CD4-positive, alpha-beta T cell (primary cell): ENCODE measurements at regions of chr12 and their contacts with region 1.

Region 1: GRCh38 chr12:120292661-120293531 is at the start of gene RNU4-1:
- DNase-seq: peak; percentile 49 to 92 (median 64)
- ATAC-seq: peak; percentile 51
- H3K4me3 ChIP-seq: peak within 1 kb of the TSS; percentile 75
- H3K4me3 Mint-ChIP-seq: no peak within 1 kb of the TSS
- H3K27ac ChIP-seq: peak within 1 kb of the TSS; percentile 99 to 100
- H3K27ac Mint-ChIP-seq: no peak within 1 kb of the TSS
- H3K4me1 ChIP-seq: peaks cover 23% of the 10 kb centered on the region
- H3K4me1 Mint-ChIP-seq: peaks cover 5% of the 10 kb centered on the region
- H3K27me3 ChIP-seq: no peaks in the 10 kb centered on the region
- H3K27me3 Mint-ChIP-seq: no peaks in the 10 kb centered on the region
- CTCF ChIP-seq: no peak
- total RNA-seq, gene RNU4-1: 913 to 1,035 TPM

Region 2: DNA sequence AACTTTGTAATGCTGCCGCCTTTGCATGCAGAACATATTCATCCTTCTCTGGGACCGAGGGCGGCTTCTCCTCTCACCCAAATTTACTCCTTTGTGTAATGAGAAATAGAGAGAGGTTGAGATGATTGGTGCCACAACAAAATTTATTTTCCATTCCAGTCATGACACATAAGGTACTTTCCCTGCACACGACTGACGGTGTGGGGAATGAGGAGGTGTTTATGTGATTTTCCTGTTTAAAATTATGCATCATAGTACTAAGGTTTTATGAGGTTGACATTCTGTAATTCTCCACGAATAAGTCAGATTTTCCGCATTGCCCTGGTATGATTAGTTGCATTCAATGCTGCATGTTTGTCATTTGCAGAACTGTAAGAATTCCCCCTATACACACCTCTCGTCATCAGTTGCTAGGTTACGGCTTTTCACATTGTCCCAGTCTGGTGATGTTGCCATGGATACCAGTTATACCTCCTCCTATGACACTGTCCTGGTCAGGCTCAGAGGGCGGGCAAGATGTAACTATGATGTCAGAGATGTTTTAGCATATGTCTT is 280.8 kb before region 1 on chr12:
- CTCF ChIA-PET with region 1: no interaction called
- POLR2A ChIA-PET with region 1: interaction called, 9 read pairs
- intact Hi-C with region 1: loop called in 1 of 2 experiments (anchors 5 kb)
- DNase-seq: peak; percentile 27 to 98 (median 62)
- ATAC-seq: peak; percentile 57
- H3K4me3 ChIP-seq: peak overlapping the region; percentile 21
- H3K4me3 Mint-ChIP-seq: peak overlapping the region; percentile 76
- H3K27ac ChIP-seq: peak overlapping the region; percentile 86 to 96
- H3K27ac Mint-ChIP-seq: peak overlapping the region; percentile 96
- H3K4me1 ChIP-seq: peaks cover 75% of the 10 kb centered on the region
- H3K4me1 Mint-ChIP-seq: peaks cover 81% of the 10 kb centered on the region
- H3K27me3 ChIP-seq: no peaks in the 10 kb centered on the region
- H3K27me3 Mint-ChIP-seq: no peaks in the 10 kb centered on the region
- CTCF ChIP-seq: no peak

Region 3: DNA sequence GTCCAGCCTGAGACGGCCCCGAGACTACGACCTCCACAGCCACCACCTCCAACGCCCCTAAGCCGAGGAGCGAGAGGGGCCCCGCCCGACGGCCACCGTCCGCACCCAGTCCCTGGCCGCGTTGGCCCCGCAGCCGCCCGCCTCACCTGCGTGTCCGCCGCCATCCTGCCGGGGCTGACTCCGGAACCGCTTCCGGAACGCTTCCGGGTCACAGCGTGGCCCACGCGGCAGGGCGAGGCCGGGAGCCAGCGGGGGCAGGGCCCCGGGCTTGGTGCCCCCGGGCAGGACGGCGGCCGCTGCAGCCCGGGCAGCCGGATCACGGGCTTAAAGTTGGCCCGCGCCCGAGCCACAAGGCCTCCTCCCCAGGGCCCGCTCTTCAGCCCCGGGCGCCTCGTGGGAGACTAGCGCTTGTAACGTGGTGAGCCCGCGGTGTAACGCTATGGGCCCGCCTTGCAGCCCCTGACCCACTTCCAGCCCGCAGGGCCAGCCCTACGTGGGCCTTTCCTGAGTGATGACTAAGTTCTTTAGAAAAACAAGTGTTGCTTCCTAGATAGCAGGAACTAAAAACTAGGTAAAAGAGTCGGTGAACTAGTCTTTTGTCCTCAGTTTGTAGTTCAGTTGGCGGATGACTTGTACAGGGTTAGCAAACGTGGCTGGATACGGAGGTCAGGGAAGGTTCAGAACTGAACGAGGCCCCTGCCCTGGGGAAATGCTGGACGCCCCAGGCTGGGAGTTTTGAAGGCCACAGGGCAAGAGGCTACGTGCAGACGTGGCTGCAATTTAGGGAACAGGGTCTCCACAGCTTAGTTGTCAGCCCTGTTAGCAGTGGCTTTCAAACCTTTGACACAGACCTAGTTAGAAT is 98.1 kb before region 1 on chr12 and contains the start of gene GCN1:
- CTCF ChIA-PET with region 1: interaction called, 13 read pairs
- POLR2A ChIA-PET with region 1: interaction called, 224 read pairs
- intact Hi-C with region 1: no loop called
- DNase-seq: peak; percentile 75 to 92 (median 86)
- ATAC-seq: peak; percentile 88
- H3K4me3 ChIP-seq: peak within 1 kb of the TSS; percentile 64
- H3K4me3 Mint-ChIP-seq: peak within 1 kb of the TSS; percentile 95
- H3K27ac ChIP-seq: peak within 1 kb of the TSS; percentile 75 to 86
- H3K27ac Mint-ChIP-seq: peak within 1 kb of the TSS; percentile 98
- H3K4me1 ChIP-seq: peaks cover 49% of the 10 kb centered on the region
- H3K4me1 Mint-ChIP-seq: peaks cover 45% of the 10 kb centered on the region
- H3K27me3 ChIP-seq: no peaks in the 10 kb centered on the region
- H3K27me3 Mint-ChIP-seq: no peaks in the 10 kb centered on the region
- CTCF ChIP-seq: no peak
- total RNA-seq, gene GCN1: 121 to 128 TPM

Region 4: DNA sequence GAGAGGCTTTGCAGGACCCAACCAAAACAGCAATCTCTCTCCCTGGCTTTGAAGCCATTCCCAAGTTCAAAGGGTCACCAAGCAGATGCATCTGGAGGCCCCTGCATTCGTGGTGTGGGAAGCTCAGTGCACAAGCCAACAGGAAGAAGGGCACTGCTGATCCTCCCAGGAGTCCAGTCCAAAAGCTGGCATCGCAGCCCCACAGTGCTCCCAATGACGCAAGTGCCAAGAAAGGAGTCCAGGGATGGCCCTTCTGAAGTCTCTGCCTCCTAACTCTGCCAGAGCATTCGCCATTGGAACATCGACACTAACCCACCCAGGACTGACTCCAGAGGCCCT is 52.4 kb before region 1 on chr12:
- CTCF ChIA-PET with region 1: no interaction called
- POLR2A ChIA-PET with region 1: interaction called, 143 read pairs
- intact Hi-C with region 1: no loop called
- DNase-seq: no peak
- ATAC-seq: no peak
- H3K4me3 ChIP-seq: no peak overlapping the region
- H3K4me3 Mint-ChIP-seq: no peak overlapping the region
- H3K27ac ChIP-seq: no peak overlapping the region
- H3K27ac Mint-ChIP-seq: peak overlapping the region; percentile 69
- H3K4me1 ChIP-seq: peaks cover 92% of the 10 kb centered on the region
- H3K4me1 Mint-ChIP-seq: peaks cover 78% of the 10 kb centered on the region
- H3K27me3 ChIP-seq: no peaks in the 10 kb centered on the region
- H3K27me3 Mint-ChIP-seq: no peaks in the 10 kb centered on the region
- CTCF ChIP-seq: no peak

Region 5: DNA sequence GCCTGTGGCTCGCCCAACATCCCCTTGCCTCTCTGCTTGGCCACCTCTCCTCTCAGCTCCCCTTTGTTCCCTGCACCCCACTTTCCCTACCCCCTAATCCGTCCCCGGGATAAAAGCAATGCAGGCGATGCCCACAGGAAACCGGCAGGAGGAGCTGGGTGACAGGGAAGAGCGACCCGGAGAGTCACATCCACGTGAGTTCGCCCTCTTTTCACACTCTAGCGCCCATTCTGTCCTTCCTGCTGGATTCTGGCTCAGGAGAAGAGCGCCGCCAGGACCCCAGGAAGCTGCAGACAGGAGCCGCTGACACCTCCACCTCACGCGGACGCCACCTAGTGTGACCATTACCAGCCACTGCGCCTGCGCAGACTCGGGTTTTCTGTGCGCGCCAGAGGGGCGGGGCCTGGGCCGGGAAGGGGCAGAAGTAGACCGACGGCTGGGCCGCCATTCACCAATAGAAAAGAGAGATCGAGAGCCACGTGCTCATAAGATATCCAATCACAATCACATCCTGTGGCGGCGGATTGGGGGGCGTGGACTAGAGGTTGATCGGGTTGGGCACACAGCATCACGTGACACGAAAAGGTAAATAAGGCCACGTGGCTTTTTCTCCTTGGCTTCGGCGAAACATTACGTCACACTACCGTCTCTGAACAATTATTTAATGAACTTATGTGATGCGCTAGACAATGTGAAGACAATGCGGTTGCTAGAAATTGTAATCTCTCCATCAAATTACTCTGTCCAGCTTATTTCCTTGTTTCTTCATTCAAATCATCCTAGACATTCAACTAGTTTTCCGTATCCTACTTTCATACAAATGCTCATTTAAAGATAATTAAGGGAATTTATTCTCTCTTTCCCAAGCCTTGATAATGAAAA is 24.6 kb after region 1 on chr12:
- CTCF ChIA-PET with region 1: interaction called, 3 read pairs
- POLR2A ChIA-PET with region 1: interaction called, 127 read pairs
- intact Hi-C with region 1: loop called in 1 of 2 experiments (anchors 1 kb)
- DNase-seq: peak; percentile 99 to 100 (median 100)
- ATAC-seq: peak; percentile 98
- H3K4me3 ChIP-seq: peak overlapping the region; percentile 80
- H3K4me3 Mint-ChIP-seq: peak overlapping the region; percentile 89
- H3K27ac ChIP-seq: peak overlapping the region; percentile 88 to 97
- H3K27ac Mint-ChIP-seq: peak overlapping the region; percentile 95
- H3K4me1 ChIP-seq: peaks cover 15% of the 10 kb centered on the region
- H3K4me1 Mint-ChIP-seq: peaks cover 16% of the 10 kb centered on the region
- H3K27me3 ChIP-seq: no peaks in the 10 kb centered on the region
- H3K27me3 Mint-ChIP-seq: no peaks in the 10 kb centered on the region
- CTCF ChIP-seq: peak; percentile 66

Region 6: DNA sequence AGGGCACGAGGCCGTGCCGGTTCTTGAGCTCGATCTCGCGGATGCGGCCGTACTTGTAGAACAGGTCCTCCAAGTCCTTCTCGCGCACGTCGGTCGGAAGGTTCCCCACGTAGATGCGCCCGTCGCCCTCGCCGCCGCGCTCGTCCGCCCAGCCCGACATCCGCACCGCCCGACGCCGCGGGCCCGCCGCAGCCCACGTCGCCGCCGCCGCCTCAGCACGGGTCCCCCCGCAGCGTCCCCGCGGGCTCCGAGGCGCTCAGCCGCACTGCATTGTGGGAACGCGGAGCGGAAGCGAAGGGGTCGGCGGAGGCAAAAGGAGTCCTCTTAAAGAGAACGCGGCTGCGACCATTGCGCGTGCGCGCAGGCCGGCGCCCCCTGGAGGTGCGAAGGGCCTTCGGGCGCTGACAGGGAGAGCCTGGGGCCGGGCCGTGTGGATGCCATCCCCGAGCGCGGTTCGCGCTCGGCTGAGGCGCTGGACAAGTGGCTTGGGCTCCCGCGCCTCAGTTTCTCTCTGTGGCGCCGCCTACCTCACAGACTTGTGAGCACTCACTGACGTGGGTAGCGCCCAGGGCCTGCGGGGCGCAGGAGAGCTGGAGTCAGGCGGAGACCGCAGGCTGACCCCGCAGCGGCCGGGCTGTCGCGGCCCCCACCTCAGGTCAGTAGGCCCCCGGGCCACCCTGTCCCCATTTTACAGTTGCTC is 176.7 kb after region 1 on chr12 and contains the start of gene SRSF9:
- CTCF ChIA-PET with region 1: no interaction called
- POLR2A ChIA-PET with region 1: interaction called, 17 read pairs
- intact Hi-C with region 1: no loop called
- DNase-seq: peak; percentile 94 to 99 (median 97)
- ATAC-seq: peak; percentile 86
- H3K4me3 ChIP-seq: peak within 1 kb of the TSS; percentile 57
- H3K4me3 Mint-ChIP-seq: peak within 1 kb of the TSS; percentile 90
- H3K27ac ChIP-seq: peak within 1 kb of the TSS; percentile 72 to 77
- H3K27ac Mint-ChIP-seq: peak within 1 kb of the TSS; percentile 87
- H3K4me1 ChIP-seq: peaks cover 39% of the 10 kb centered on the region
- H3K4me1 Mint-ChIP-seq: peaks cover 46% of the 10 kb centered on the region
- H3K27me3 ChIP-seq: no peaks in the 10 kb centered on the region
- H3K27me3 Mint-ChIP-seq: no peaks in the 10 kb centered on the region
- CTCF ChIP-seq: peak; percentile 91
- total RNA-seq, gene SRSF9: 124 TPM

Region 7: GRCh38 chr12:120761519-120761934 is 468.6 kb after region 1 on chr12:
- CTCF ChIA-PET with region 1: no interaction called
- POLR2A ChIA-PET with region 1: no interaction called
- intact Hi-C with region 1: no loop called
- DNase-seq: no peak
- ATAC-seq: peak; percentile 33
- H3K4me3 ChIP-seq: no peak overlapping the region
- H3K4me3 Mint-ChIP-seq: no peak overlapping the region
- H3K27ac ChIP-seq: peak overlapping the region; percentile 4 to 47
- H3K27ac Mint-ChIP-seq: peak overlapping the region; percentile 92
- H3K4me1 ChIP-seq: peaks cover 25% of the 10 kb centered on the region
- H3K4me1 Mint-ChIP-seq: peaks cover 31% of the 10 kb centered on the region
- H3K27me3 ChIP-seq: no peaks in the 10 kb centered on the region
- H3K27me3 Mint-ChIP-seq: no peaks in the 10 kb centered on the region
- CTCF ChIP-seq: no peak

Region 8: GRCh38 chr12:121802846-121803630 is 1510.1 kb after region 1 on chr12:
- CTCF ChIA-PET with region 1: no interaction called
- POLR2A ChIA-PET with region 1: interaction called, 19 read pairs
- intact Hi-C with region 1: no loop called
- DNase-seq: peak; percentile 78 to 96 (median 85)
- ATAC-seq: peak; percentile 47
- H3K4me3 ChIP-seq: peak overlapping the region; percentile 100
- H3K4me3 Mint-ChIP-seq: peak overlapping the region; percentile 99
- H3K27ac ChIP-seq: peak overlapping the region; percentile 96 to 97
- H3K27ac Mint-ChIP-seq: peak overlapping the region; percentile 98
- H3K4me1 ChIP-seq: peaks cover 50% of the 10 kb centered on the region
- H3K4me1 Mint-ChIP-seq: peaks cover 44% of the 10 kb centered on the region
- H3K27me3 ChIP-seq: no peaks in the 10 kb centered on the region
- H3K27me3 Mint-ChIP-seq: no peaks in the 10 kb centered on the region
- CTCF ChIP-seq: no peak